Activated B cell treated with CpG ODN at 0.5 μM for 24 hours (primary cell): ENCODE measurements at regions of chr11 and their contacts with region 1.

Region 1: GRCh38 chr11:34243726-34244464 is 113.9 kb downstream of the ABTB2 start:
- DNase-seq: no peak
- ATAC-seq: peak; percentile 33
- H3K4me3 Mint-ChIP-seq: peak overlapping the region; percentile 72
- H3K27ac Mint-ChIP-seq: peak overlapping the region; percentile 92
- H3K4me1 Mint-ChIP-seq: peaks cover 83% of the 10 kb centered on the region
- H3K27me3 Mint-ChIP-seq: no peaks in the 10 kb centered on the region
- CTCF ChIP-seq: no peak

Region 2: DNA sequence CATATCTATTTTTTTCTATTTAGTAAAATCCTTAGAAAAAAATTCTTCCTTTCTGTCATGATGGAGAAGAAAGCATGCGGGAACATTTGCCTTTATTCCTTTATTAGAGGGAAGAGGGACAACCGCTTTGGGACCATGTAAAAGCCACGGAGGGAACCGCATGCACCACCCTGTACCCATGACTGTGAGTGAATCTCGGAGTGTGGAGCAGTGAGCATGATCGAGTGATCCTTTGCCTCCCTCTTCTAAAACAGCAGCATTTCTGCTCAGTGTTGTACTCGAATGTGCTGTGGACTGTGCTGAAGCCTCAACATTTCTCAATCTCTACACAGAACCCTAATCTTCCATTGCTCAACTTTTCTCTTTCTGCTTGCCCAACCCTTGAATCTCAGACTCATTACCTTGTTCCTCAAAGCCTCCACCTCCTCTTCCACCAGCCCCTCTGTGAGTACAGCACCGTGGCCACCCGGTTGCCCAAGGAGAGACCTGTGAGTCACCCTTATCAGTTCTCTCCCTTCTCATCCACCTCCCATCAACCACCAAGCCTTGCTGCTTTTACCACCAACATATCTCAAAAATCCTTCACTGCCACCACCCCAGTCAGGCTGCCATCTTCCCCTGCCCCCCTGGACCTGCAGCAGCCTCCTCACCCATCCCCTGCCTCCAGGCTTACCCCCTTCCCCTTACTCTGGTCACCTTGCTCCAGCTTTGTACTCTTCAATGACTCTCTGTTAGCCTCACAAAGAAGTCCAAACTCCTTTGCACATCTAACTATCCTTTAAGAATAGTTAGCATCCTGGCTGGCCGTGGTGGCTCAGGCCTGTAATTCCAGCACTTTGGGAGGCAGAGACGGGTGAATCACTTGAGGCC is 35.4 kb before region 1 on chr11:
- CTCF ChIA-PET with region 1: no interaction called
- POLR2A ChIA-PET with region 1: interaction called, 8 read pairs
- intact Hi-C with region 1: loop called (anchors 5 kb)
- DNase-seq: no peak
- ATAC-seq: peak; percentile 83
- H3K4me3 Mint-ChIP-seq: no peak overlapping the region
- H3K27ac Mint-ChIP-seq: peak overlapping the region; percentile 10
- H3K4me1 Mint-ChIP-seq: peaks cover 32% of the 10 kb centered on the region
- H3K27me3 Mint-ChIP-seq: no peaks in the 10 kb centered on the region
- CTCF ChIP-seq: no peak

Region 3: DNA sequence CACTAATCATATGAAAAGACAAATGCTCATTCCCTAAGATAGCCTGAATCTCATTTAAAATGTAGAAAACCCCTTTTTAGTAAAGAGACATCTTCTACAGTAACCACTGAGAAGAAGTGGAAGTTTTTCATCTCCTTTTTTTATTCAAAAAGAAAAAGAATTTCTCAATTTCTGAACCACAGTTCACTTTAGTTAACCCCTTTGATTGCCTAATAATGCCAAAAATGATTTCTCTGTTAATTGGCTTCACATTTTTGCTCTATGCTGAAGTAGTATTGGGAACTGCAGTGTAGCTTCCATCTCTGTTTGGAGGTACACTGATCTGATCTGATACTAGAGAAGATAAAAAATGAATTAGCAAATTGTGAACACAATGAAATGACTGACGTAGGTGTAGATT is 953.4 kb after region 1 on chr11:
- CTCF ChIA-PET with region 1: no interaction called
- POLR2A ChIA-PET with region 1: no interaction called
- intact Hi-C with region 1: no loop called
- DNase-seq: no peak
- ATAC-seq: no peak
- H3K4me3 Mint-ChIP-seq: no peak overlapping the region
- H3K27ac Mint-ChIP-seq: no peak overlapping the region
- H3K4me1 Mint-ChIP-seq: peaks cover 17% of the 10 kb centered on the region
- H3K27me3 Mint-ChIP-seq: no peaks in the 10 kb centered on the region
- CTCF ChIP-seq: no peak